A673 (cell line): ENCODE measurements at regions of chr1 and their contacts with region 1.

Region 1: GRCh38 chr1:183685112-183685713 is 32.1 kb upstream of the APOBEC4 start:
- DNase-seq: peak; percentile 82
- H3K4me3 ChIP-seq: no peak overlapping the region
- H3K27ac ChIP-seq: no peak overlapping the region
- H3K4me1 ChIP-seq: peaks cover 13% of the 10 kb centered on the region
- H3K27me3 ChIP-seq: no peaks in the 10 kb centered on the region
- CTCF ChIP-seq: peak; percentile 85

Region 2: DNA sequence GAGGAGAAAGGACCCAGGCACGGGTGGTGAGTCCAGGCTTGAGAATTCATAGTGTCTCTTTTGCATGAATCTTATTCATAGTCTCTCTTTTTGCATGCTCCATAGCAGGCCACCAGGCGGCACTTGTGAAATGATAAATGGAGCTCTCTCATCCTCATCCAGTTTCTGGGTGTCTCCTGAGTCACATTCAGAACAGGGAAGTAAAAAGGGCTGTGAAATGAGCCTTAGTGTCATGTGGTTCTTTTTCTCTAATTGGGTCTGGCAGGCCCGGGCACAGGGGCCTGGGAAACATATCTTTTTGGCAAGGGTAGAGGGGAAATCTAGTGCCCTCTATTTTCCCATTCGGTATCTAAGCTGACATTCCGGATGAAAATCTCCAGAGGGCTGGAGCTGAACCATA is 75.9 kb before region 1 on chr1:
- CTCF ChIA-PET with region 1: interaction called, 13 read pairs
- POLR2A ChIA-PET with region 1: no interaction called
- intact Hi-C with region 1: no loop called
- DNase-seq: peak; percentile 83
- H3K4me3 ChIP-seq: no peak overlapping the region
- H3K27ac ChIP-seq: no peak overlapping the region
- H3K4me1 ChIP-seq: peaks cover 9% of the 10 kb centered on the region
- H3K27me3 ChIP-seq: no peaks in the 10 kb centered on the region
- CTCF ChIP-seq: peak; percentile 72

Region 3: DNA sequence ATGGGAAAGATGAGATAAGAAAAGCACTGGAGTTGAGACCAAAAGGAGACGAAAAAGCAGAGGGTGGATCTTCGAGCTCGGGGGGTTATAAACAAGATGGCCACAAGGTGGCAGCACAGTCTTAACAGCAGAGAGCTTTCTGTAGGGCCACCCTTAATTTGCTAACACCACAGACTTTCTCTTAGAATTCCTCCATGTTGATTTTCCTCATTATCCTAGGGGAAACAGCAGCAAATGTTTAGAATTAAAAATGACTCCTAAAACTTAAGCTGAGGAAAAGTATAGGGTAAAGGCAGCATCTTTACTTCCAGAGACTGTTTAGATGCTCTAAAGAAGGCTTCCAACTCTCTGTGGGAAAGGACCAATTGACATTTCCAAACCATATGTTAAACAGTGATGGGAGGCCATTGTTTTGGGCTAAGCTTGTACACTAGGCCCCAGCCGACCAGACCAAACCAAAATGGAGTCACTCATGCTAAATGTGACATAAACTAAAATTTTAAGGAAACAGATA is 29.6 kb before region 1 on chr1:
- CTCF ChIA-PET with region 1: interaction called, 6 read pairs
- POLR2A ChIA-PET with region 1: no interaction called
- intact Hi-C with region 1: loop called (anchors 1 kb)
- DNase-seq: peak; percentile 93
- H3K4me3 ChIP-seq: no peak overlapping the region
- H3K27ac ChIP-seq: peak overlapping the region; percentile 50
- H3K4me1 ChIP-seq: peaks cover 42% of the 10 kb centered on the region
- H3K27me3 ChIP-seq: no peaks in the 10 kb centered on the region
- CTCF ChIP-seq: peak; percentile 95

Region 4: GRCh38 chr1:183720028-183720427 is 34.8 kb after region 1 on chr1:
- CTCF ChIA-PET with region 1: no interaction called
- POLR2A ChIA-PET with region 1: no interaction called
- intact Hi-C with region 1: no loop called
- DNase-seq: no peak
- H3K4me3 ChIP-seq: no peak overlapping the region
- H3K27ac ChIP-seq: no peak overlapping the region
- H3K4me1 ChIP-seq: no peaks in the 10 kb centered on the region
- H3K27me3 ChIP-seq: no peaks in the 10 kb centered on the region
- CTCF ChIP-seq: no peak